Panc1 (cell line): ENCODE measurements at regions of chr16 and their contacts with region 1.

Region 1: DNA sequence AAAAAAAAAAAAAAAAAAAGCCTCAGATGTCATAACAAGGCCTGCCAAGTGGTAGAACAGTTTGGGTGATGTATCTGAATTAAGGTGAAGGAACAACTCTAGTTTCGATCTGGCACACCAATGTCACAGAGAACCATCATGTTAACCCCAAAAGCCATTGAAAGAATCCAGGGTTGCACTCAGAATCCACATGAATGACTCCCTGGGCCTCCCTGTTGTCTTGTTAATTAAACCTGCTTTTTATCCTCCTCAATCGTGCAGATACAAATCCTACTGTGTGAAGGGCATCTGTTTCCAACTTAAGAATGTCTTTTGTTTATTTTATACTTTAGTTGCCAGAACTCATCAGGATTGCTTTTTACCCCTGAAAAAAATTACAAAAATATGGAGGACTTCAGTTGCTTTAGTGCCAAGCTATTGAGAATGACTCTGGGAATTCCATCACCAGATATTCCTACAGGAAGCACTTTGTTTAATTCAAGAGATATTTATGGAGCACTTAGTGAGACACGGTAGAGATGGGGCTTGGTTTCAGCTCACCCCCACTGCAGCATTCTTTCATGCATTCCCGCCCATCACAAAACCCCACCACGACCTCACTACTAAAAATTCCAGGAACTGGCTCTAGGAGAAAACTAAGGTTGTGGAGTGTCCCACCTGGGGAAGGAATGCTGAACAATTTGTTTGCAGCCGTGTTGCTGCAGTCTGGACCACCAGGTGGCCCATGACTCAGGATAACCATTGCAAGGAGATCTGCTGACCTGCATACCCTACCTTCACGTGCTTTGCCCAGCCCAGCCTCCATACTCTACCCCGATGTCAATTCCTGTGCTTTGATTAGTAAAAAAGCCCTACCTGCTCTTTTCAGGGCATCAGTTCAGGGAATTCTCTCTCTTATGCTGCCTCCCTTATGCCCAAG is 63.8 kb upstream of the GPRC5B start:
- DNase-seq: no peak
- ATAC-seq: no peak
- H3K4me3 ChIP-seq: no peak overlapping the region
- H3K27ac ChIP-seq: no peak overlapping the region
- H3K4me1 ChIP-seq: no peaks in the 10 kb centered on the region
- H3K27me3 ChIP-seq: peaks cover 2% of the 10 kb centered on the region; the same call in 1 of the 2 replicates
- CTCF ChIP-seq: no peak

Region 2: DNA sequence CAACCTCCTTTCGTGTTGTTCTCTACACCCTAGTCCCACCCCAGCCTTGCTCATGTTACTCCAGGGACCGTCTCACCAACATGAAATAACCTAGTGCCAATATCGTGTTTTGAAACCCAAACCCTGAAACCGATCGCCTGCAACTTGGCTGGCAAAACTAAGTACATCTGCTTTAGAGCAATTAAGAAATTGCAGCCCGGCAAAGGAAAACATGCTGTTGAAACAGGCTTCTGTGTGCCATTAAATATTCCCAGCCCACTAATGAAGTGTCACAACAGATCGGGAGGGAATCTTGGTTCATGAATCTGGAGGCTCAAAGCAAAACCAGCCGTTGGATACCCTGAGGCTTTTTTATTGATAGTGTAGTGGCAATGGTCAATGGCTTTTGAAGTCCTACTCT is 173.6 kb after region 1 on chr16:
- CTCF ChIA-PET with region 1: no interaction called
- POLR2A ChIA-PET with region 1: interaction called, 11 read pairs
- in situ Hi-C with region 1: no loop called
- intact Hi-C with region 1: no loop called
- DNase-seq: no peak
- ATAC-seq: no peak
- H3K4me3 ChIP-seq: no peak overlapping the region
- H3K27ac ChIP-seq: no peak overlapping the region
- H3K4me1 ChIP-seq: no peaks in the 10 kb centered on the region
- H3K27me3 ChIP-seq: peaks cover 10% of the 10 kb centered on the region
- CTCF ChIP-seq: no peak